ENCODE measurements at regions of chr3 and their contacts with region 1.

Region 1: DNA sequence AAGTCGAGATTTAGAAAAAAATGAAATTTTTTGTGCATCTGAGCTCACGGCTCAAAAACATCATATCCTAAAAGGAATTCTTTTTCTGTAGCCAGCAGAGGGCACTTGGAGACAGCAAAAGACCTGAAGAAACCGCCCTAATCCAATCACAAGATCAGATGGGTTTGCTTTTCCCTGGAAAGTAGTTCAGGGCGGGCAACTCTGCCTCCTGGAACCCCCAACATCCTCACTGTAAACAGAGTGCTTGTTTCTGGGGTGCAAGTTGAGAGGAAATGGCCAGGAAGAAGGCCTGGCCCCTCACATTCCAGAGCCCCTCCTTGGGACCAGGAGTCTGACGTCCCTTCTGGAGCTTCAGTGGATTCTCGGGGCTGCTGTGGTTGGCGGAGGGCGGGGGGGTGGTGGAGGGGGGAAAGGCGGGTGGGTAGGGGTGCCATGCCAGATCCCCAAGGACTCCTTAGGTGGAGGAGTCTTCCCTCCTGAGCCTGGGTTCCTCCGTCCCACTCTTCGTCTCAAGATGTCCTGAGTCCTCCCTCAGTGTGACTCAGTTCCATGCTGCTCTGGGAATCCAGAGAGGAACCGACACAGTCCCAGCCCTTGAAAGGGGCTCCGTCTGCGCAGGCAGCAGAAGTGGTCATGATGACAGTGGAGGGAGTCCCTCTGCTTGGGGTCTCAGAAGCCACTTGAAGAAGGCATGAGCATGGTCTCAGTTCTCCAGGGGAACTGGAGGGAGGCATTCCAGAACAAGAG is 35.9 kb downstream of the CCK start:
- DNase-seq: no peak
- H3K4me3 ChIP-seq: no peak overlapping the region
- H3K27me3 ChIP-seq: no peaks in the 10 kb centered on the region; the same call in 1 of the 2 replicates
- CTCF ChIP-seq: peak; percentile 64

Region 2: GRCh38 chr3:41893977-41894376 is 336.1 kb before region 1 on chr3:
- CTCF ChIA-PET with region 1: interaction called, 10 read pairs
- POLR2A ChIA-PET with region 1: no interaction called
- DNase-seq: no peak
- H3K4me3 ChIP-seq: no peak overlapping the region
- H3K27me3 ChIP-seq: no peaks in the 10 kb centered on the region
- CTCF ChIP-seq: peak; percentile 46

Region 3: GRCh38 chr3:42443819-42444436 is 213.8 kb after region 1 on chr3:
- CTCF ChIA-PET with region 1: interaction called, 47 read pairs
- POLR2A ChIA-PET with region 1: no interaction called
- DNase-seq: peak; percentile 3
- H3K4me3 ChIP-seq: no peak overlapping the region
- H3K27me3 ChIP-seq: peaks cover 6% of the 10 kb centered on the region
- CTCF ChIP-seq: peak; percentile 96

Region 4: DNA sequence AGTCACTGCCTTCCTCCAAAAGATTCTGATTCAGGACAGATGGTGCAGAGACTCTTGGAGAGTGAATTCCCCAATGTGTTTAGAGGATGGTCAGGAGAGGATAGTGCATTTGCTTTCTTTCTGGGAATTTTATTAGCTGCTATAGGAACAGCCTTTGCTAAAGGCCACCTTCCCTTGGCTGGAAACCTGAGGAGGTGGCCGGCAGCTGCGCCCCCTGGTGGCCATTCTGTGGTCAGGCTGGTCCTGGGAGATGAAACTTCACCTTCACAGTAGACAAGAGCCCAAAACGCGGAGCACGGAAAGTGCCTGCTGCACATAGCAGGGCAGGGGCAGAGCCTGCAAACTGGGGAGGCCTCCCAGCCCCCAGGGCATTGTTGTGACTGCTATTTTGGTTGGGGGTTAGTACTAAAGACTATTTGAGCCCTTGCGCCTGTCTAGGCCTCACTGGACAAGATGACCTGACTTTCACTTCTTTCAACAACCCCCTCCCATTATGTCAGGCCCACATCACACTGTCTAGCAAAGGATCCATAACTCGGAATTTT is 317.4 kb after region 1 on chr3:
- CTCF ChIA-PET with region 1: interaction called, 14 read pairs
- POLR2A ChIA-PET with region 1: no interaction called
- DNase-seq: peak; percentile 4
- H3K4me3 ChIP-seq: no peak overlapping the region
- H3K27me3 ChIP-seq: no peaks in the 10 kb centered on the region
- CTCF ChIP-seq: peak; percentile 99